ENCODE measurements at regions of chr5 and their contacts with region 1.

Region 1: GRCh38 chr5:151651997-151652645 is 34.6 kb downstream of the SPARC start:
- DNase-seq: peak; percentile 79 to 86
- H3K4me3 ChIP-seq: no peak overlapping the region
- H3K4me3 Mint-ChIP-seq: no peak overlapping the region
- H3K27ac Mint-ChIP-seq: no peak overlapping the region
- H3K4me1 ChIP-seq: no peaks in the 10 kb centered on the region
- H3K4me1 Mint-ChIP-seq: peaks cover 7% of the 10 kb centered on the region
- H3K27me3 ChIP-seq: no peaks in the 10 kb centered on the region
- H3K27me3 Mint-ChIP-seq: no peaks in the 10 kb centered on the region
- CTCF ChIP-seq: peak; percentile 88 to 98

Region 2: GRCh38 chr5:151252762-151253604 is 399.1 kb before region 1 on chr5 and contains the start of gene GM2A:
- CTCF ChIA-PET with region 1: interaction called, 12 read pairs
- POLR2A ChIA-PET with region 1: no interaction called
- intact Hi-C with region 1: no loop called
- DNase-seq: peak; percentile 99 to 100
- H3K4me3 ChIP-seq: peak within 1 kb of the TSS; percentile 76
- H3K4me3 Mint-ChIP-seq: peak within 1 kb of the TSS; percentile 76
- H3K27ac Mint-ChIP-seq: peak within 1 kb of the TSS; percentile 50
- H3K4me1 ChIP-seq: peaks cover 16% of the 10 kb centered on the region
- H3K4me1 Mint-ChIP-seq: peaks cover 23% of the 10 kb centered on the region
- H3K27me3 ChIP-seq: no peaks in the 10 kb centered on the region
- H3K27me3 Mint-ChIP-seq: no peaks in the 10 kb centered on the region
- CTCF ChIP-seq: no peak
- total RNA-seq, gene GM2A: 27.6 and 28.0 TPM in 2 replicates

Region 3: GRCh38 chr5:151315998-151316597 is 336.0 kb before region 1 on chr5:
- CTCF ChIA-PET with region 1: interaction called, 8 read pairs
- POLR2A ChIA-PET with region 1: no interaction called
- intact Hi-C with region 1: loop called (anchors 5 kb)
- DNase-seq: peak; percentile 74 to 81
- H3K4me3 ChIP-seq: no peak overlapping the region
- H3K4me3 Mint-ChIP-seq: no peak overlapping the region
- H3K27ac Mint-ChIP-seq: no peak overlapping the region
- H3K4me1 ChIP-seq: peaks cover 8% of the 10 kb centered on the region; the same call in 1 of the 2 replicates
- H3K4me1 Mint-ChIP-seq: peaks cover 13% of the 10 kb centered on the region
- H3K27me3 ChIP-seq: no peaks in the 10 kb centered on the region
- H3K27me3 Mint-ChIP-seq: no peaks in the 10 kb centered on the region
- CTCF ChIP-seq: peak; percentile 89 to 92

Region 4: GRCh38 chr5:151499501-151500035 is 152.6 kb before region 1 on chr5:
- CTCF ChIA-PET with region 1: interaction called, 7 read pairs
- POLR2A ChIA-PET with region 1: no interaction called
- intact Hi-C with region 1: loop called (anchors 1 kb)
- DNase-seq: no peak
- H3K4me3 ChIP-seq: no peak overlapping the region
- H3K4me3 Mint-ChIP-seq: no peak overlapping the region
- H3K27ac Mint-ChIP-seq: no peak overlapping the region
- H3K4me1 ChIP-seq: no peaks in the 10 kb centered on the region
- H3K4me1 Mint-ChIP-seq: no peaks in the 10 kb centered on the region
- H3K27me3 ChIP-seq: no peaks in the 10 kb centered on the region
- H3K27me3 Mint-ChIP-seq: no peaks in the 10 kb centered on the region
- CTCF ChIP-seq: no peak

Region 5: DNA sequence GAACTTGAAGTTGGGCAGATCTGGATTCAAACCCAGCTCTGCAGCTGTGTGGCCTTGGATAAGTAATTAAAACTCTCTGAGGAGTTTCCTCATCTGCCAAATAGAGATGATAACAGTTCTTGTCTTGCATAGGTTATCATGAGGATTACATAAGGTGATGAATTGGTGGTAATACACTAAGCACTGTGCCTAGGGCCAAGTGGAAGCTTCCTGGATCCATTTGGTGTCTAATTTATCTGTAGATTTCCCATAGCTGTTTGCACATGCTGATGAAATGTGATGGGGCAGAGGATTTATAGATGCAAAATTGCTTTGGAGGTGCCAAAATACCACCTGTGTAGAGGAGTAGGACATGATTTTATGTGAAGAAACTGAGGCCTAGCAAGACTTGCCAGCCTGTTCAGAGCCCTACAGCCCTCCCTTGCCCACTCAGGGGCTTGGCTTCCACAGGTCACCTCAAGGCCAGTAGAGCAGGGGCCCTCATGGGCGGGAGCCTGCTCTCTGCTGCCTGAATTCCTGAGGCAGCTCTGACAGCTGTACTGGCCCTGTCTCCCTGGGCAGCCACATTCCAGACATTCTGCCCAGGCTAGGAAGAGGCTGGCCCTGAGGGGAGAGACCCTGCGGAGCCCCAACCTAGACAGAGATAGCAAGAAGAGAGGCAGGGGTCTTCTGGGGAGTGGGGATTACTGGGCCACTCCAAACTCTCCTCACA is 55.1 kb before region 1 on chr5:
- CTCF ChIA-PET with region 1: interaction called, 6 read pairs
- POLR2A ChIA-PET with region 1: no interaction called
- intact Hi-C with region 1: loop called (anchors 2 kb)
- DNase-seq: peak; percentile 71 to 82
- H3K4me3 ChIP-seq: no peak overlapping the region
- H3K4me3 Mint-ChIP-seq: peak overlapping the region; percentile 42
- H3K27ac Mint-ChIP-seq: peak overlapping the region; percentile 66
- H3K4me1 ChIP-seq: peaks cover 37% of the 10 kb centered on the region
- H3K4me1 Mint-ChIP-seq: peaks cover 38% of the 10 kb centered on the region
- H3K27me3 ChIP-seq: no peaks in the 10 kb centered on the region
- H3K27me3 Mint-ChIP-seq: no peaks in the 10 kb centered on the region
- CTCF ChIP-seq: no peak

Region 6: GRCh38 chr5:151740336-151740942 is 88.3 kb after region 1 on chr5:
- CTCF ChIA-PET with region 1: interaction called, 10 read pairs
- POLR2A ChIA-PET with region 1: no interaction called
- intact Hi-C with region 1: no loop called
- DNase-seq: peak; percentile 62 to 70
- H3K4me3 ChIP-seq: no peak overlapping the region
- H3K4me3 Mint-ChIP-seq: no peak overlapping the region
- H3K27ac Mint-ChIP-seq: peak overlapping the region; percentile 51
- H3K4me1 ChIP-seq: peaks cover 15% of the 10 kb centered on the region
- H3K4me1 Mint-ChIP-seq: peaks cover 16% of the 10 kb centered on the region
- H3K27me3 ChIP-seq: no peaks in the 10 kb centered on the region
- H3K27me3 Mint-ChIP-seq: no peaks in the 10 kb centered on the region
- CTCF ChIP-seq: peak; percentile 82 to 94